Transverse colon (tissue), 4 donors: ENCODE measurements at regions of chr2 and their contacts with region 1.

Region 1: DNA sequence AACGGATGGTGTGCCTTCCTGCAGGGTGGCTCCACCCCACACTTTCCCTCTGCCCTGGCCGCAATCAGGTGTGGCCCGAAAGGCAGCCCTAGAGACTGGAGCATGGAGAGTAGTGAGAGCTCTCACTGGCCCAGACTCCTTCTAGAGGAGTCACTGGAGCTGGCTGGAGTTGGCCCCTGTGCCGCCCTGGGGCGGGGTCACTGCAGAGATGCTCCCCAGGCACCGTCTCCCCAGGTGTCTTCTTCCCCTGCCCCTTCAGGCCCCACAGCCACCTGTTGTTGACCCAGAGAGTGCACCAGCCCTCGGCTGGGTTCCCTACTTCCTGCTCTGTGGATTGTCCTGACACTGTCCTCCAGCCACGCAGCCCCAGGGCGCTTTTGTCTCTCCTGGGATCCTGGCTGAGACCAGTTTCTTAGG is 126.7 kb downstream of the PXDN start:
- DNase-seq: no peak
- H3K4me3 ChIP-seq: no peak overlapping the region
- H3K27ac ChIP-seq: peak overlapping the region in 3 of 4 donors; percentile 63 to 78 (median 64)
- H3K4me1 ChIP-seq: peaks cover 4 to 25% (median 20%) of the 10 kb centered on the region in 4 donors
- H3K27me3 ChIP-seq: no peaks in the 10 kb centered on the region
- CTCF ChIP-seq: no peak
- EP300 ChIP-seq: no peak
- POLR2A ChIP-seq: no peak

Region 2: GRCh38 chr2:1550658-1551316 is 66.8 kb before region 1 on chr2:
- in situ Hi-C with region 1: no loop called
- intact Hi-C with region 1: no loop called
- DNase-seq: peak; percentile 55
- H3K4me3 ChIP-seq: no peak overlapping the region
- H3K27ac ChIP-seq: no peak overlapping the region
- H3K4me1 ChIP-seq: peaks cover 0 to 5% (median 3%) of the 10 kb centered on the region in 4 donors
- H3K27me3 ChIP-seq: no peaks in the 10 kb centered on the region
- CTCF ChIP-seq: peak; percentile 79 to 98 (median 96)
- EP300 ChIP-seq: no peak
- POLR2A ChIP-seq: no peak

Region 3: GRCh38 chr2:1584691-1585485 is 32.7 kb before region 1 on chr2:
- in situ Hi-C with region 1: no loop called
- intact Hi-C with region 1: no loop called
- DNase-seq: no peak
- H3K4me3 ChIP-seq: no peak overlapping the region
- H3K27ac ChIP-seq: no peak overlapping the region
- H3K4me1 ChIP-seq: peaks cover 0 to 5% (median 0%) of the 10 kb centered on the region in 4 donors
- H3K27me3 ChIP-seq: no peaks in the 10 kb centered on the region
- CTCF ChIP-seq: no peak
- EP300 ChIP-seq: no peak
- POLR2A ChIP-seq: no peak

Region 4: DNA sequence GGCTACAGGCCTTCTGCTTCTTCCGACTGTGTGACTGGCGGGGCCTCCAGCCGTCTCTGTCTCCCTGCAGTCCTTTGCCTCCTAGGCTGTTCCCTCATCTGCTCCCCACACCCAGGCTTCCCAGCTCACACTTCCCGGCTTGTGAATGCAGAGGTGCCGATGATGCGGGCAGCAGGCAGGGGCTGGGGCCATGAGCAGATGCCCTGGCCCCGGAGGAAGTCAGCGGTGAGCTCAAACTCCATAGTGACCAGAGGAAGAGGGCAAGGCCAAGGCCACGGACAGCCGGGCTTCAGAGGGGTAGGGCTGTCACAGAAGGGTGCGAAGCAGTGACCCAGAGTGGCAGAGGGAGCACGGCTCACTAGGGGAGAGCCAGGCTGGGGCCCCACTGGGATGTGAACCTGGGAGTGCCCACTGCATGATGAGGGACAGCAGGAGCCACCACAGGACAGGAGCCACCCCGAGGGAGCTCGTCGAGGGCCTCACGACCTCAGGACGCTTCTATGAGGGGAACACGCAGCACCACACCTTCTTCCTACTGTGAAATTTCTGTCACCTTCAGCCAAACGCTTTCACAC is 1244.2 kb after region 1 on chr2:
- in situ Hi-C with region 1: no loop called
- intact Hi-C with region 1: loop called (anchors 5 kb)
- DNase-seq: no peak
- H3K4me3 ChIP-seq: no peak overlapping the region
- H3K27ac ChIP-seq: no peak overlapping the region
- H3K4me1 ChIP-seq: no peaks in the 10 kb centered on the region
- H3K27me3 ChIP-seq: no peaks in the 10 kb centered on the region
- CTCF ChIP-seq: no peak
- EP300 ChIP-seq: no peak
- POLR2A ChIP-seq: no peak